ENCODE measurements at regions of chr9 and their contacts with region 1.

Region 1: GRCh38 chr9:121686930-121687541 is 35.6 kb downstream of the DAB2IP start:
- DNase-seq: peak; percentile 51 to 78
- ATAC-seq: peak; percentile 56 to 80 (median 68)
- H3K4me3 ChIP-seq: no peak overlapping the region
- H3K27ac ChIP-seq: peak overlapping the region in 4 of 10 donors; percentile 9 to 24 (median 16)
- H3K4me1 ChIP-seq: peaks cover 12 to 73% (median 35%) of the 10 kb centered on the region in 9 donors
- H3K27me3 ChIP-seq: no peaks in the 10 kb centered on the region
- CTCF ChIP-seq: peak; percentile 73 to 90 (median 84)

Region 2: DNA sequence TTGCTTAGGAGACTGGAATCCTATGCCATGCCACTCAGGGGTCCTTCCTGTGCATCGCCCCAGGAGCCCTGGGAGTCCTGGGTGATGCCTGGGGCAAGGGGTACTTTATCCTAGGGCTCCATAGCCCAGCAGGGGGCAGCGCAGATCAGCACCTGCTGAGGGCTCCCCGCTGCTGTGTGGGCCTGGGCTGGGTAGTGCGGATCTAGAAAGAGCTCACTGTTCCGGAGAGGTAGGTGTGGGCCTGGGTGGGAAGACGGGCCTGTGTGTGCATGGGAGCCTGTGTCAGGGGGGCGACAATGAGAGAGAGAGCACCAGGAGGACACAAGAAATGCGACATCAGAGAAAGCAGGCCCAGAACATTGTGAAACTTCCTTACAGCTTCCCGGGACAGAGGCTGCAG is 47.0 kb before region 1 on chr9:
- intact Hi-C with region 1: loop called in 5 of 10 experiments (anchors 2 to 5 kb)
- DNase-seq: peak; percentile 70 to 73
- ATAC-seq: peak; percentile 52 to 84 (median 74)
- H3K4me3 ChIP-seq: no peak overlapping the region
- H3K27ac ChIP-seq: peak overlapping the region in 9 of 10 donors; percentile 32 to 79 (median 47)
- H3K4me1 ChIP-seq: peaks cover 16 to 90% (median 61%) of the 10 kb centered on the region in 9 donors
- H3K27me3 ChIP-seq: no peaks in the 10 kb centered on the region
- CTCF ChIP-seq: peak; percentile 53 to 76 (median 68)

Region 3: GRCh38 chr9:121852651-121853616 is 165.9 kb after region 1 on chr9:
- intact Hi-C with region 1: loop called in 3 of 10 experiments (anchors 10 kb)
- DNase-seq: peak; percentile 42 to 58
- ATAC-seq: peak; percentile 56 to 82 (median 76)
- H3K4me3 ChIP-seq: no peak overlapping the region
- H3K27ac ChIP-seq: peak overlapping the region in 6 of 10 donors; percentile 12 to 65 (median 25)
- H3K4me1 ChIP-seq: peaks cover 0 to 25% (median 11%) of the 10 kb centered on the region in 9 donors
- H3K27me3 ChIP-seq: no peaks in the 10 kb centered on the region
- CTCF ChIP-seq: no peak

Region 4: GRCh38 chr9:121876658-121877271 is 189.7 kb after region 1 on chr9:
- intact Hi-C with region 1: loop called in 1 of 10 experiments (anchors 10 kb)
- DNase-seq: peak in 1 of 2 donors; percentile 35
- ATAC-seq: peak; percentile 23 to 95 (median 74)
- H3K4me3 ChIP-seq: no peak overlapping the region
- H3K27ac ChIP-seq: peak overlapping the region in 1 of 10 donors; percentile 43
- H3K4me1 ChIP-seq: peaks cover 0 to 13% (median 5%) of the 10 kb centered on the region in 9 donors
- H3K27me3 ChIP-seq: no peaks in the 10 kb centered on the region
- CTCF ChIP-seq: no peak

Measured in heart right ventricle (tissue), 16 donors.